ENCODE measurements at regions of chr9 and their contacts with region 1.

Region 1: GRCh38 chr9:108282872-108283271 is 572.9 kb downstream of the ACTL7B start:
- DNase-seq: no peak
- H3K4me3 ChIP-seq: no peak overlapping the region
- CTCF ChIP-seq: no peak

Region 2: GRCh38 chr9:108254236-108254635 is 28.6 kb before region 1 on chr9:
- CTCF ChIA-PET with region 1: no interaction called
- POLR2A ChIA-PET with region 1: no interaction called
- DNase-seq: no peak
- H3K4me3 ChIP-seq: no peak overlapping the region
- CTCF ChIP-seq: no peak

Region 3: GRCh38 chr9:108272349-108272899 is 10.4 kb before region 1 on chr9:
- CTCF ChIA-PET with region 1: interaction called, 35 read pairs
- POLR2A ChIA-PET with region 1: no interaction called
- DNase-seq: no peak
- H3K4me3 ChIP-seq: peak overlapping the region; percentile 40
- CTCF ChIP-seq: peak; percentile 37